Activated CD4-positive, alpha-beta T cell treated with anti-CD3 and anti-CD28 coated beads, Interleukin-2, amount 10 ng/mL, durations not matched to agents 7 days and 5 days (primary cell): ENCODE measurements at regions of chr1 and their contacts with region 1.

Region 1: GRCh38 chr1:228139944-228140656 is at the start of gene GUK1:
- DNase-seq: peak; percentile 100
- H3K4me3 Mint-ChIP-seq: peak within 1 kb of the TSS; percentile 99
- H3K27ac Mint-ChIP-seq: peak within 1 kb of the TSS; percentile 100
- H3K4me1 Mint-ChIP-seq: peaks cover 41% of the 10 kb centered on the region
- H3K27me3 Mint-ChIP-seq: peaks cover 21% of the 10 kb centered on the region
- total RNA-seq, gene GUK1: 207 to 260 TPM

Region 2: GRCh38 chr1:228120857-228121489 is 19.1 kb before region 1 on chr1:
- CTCF ChIA-PET with region 1: interaction called, 10 read pairs
- POLR2A ChIA-PET with region 1: interaction called, 3 read pairs
- DNase-seq: no peak
- H3K4me3 Mint-ChIP-seq: no peak overlapping the region
- H3K27ac Mint-ChIP-seq: peak overlapping the region; percentile 41
- H3K4me1 Mint-ChIP-seq: peaks cover 11% of the 10 kb centered on the region
- H3K27me3 Mint-ChIP-seq: no peaks in the 10 kb centered on the region

Region 3: DNA sequence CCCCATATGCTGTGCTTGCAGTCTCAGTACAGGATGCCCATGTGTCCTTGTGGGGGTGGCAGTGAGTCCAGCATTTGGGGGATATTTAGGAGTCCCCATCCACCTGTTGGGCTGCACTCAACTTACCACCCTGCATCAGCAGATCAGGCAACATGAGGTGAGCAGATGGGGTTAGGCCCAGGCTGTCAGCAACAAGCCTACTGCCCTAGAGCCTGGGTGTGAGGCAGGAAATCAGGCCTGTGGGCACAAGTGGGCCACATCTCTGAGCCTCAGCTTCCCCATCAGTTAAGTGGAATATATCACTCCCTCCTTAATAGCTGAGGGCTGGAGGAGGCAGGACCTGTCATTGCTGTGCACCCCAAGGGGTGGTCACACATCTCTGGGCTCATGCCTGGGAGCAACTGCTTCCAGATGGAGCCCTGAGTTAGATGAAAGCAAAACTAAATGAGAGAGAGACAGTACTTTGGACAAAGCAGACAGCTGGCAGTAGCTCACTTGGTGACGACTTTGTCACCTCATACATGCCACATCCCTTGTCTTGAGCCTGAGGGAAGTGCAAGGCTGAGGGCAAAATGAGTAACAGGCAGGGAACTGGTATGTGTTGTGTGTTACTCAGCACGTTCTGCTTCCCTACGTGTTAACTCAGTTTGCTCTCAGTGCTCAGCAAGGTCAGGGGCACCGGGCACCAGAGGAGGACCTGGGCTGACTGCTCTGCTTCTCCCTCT is 218.1 kb after region 1 on chr1:
- CTCF ChIA-PET with region 1: no interaction called
- POLR2A ChIA-PET with region 1: no interaction called
- DNase-seq: no peak
- H3K4me3 Mint-ChIP-seq: no peak overlapping the region
- H3K27ac Mint-ChIP-seq: no peak overlapping the region
- H3K4me1 Mint-ChIP-seq: no peaks in the 10 kb centered on the region
- H3K27me3 Mint-ChIP-seq: no peaks in the 10 kb centered on the region